Naive thymus-derived CD4-positive, alpha-beta T cell (primary cell): ENCODE measurements at regions of chr11 and their contacts with region 1.

Region 1: GRCh38 chr11:114159802-114160632 is 100.5 kb downstream of the ZBTB16 start:
- DNase-seq: peak; percentile 79 to 100 (median 99)
- ATAC-seq: peak; percentile 97
- H3K4me3 ChIP-seq: peak overlapping the region; percentile 21
- H3K4me3 Mint-ChIP-seq: peak overlapping the region; percentile 53 to 85 (median 78)
- H3K27ac ChIP-seq: peak overlapping the region; percentile 62
- H3K27ac Mint-ChIP-seq: peak overlapping the region; percentile 88 to 98 (median 93)
- H3K4me1 ChIP-seq: peaks cover 23 to 70% of the 10 kb centered on the region in 2 donors
- H3K4me1 Mint-ChIP-seq: peaks cover 58 to 98% (median 90%) of the 10 kb centered on the region in 7 donors
- H3K27me3 ChIP-seq: no peaks in the 10 kb centered on the region
- H3K27me3 Mint-ChIP-seq: no peaks in the 10 kb centered on the region

Region 2: DNA sequence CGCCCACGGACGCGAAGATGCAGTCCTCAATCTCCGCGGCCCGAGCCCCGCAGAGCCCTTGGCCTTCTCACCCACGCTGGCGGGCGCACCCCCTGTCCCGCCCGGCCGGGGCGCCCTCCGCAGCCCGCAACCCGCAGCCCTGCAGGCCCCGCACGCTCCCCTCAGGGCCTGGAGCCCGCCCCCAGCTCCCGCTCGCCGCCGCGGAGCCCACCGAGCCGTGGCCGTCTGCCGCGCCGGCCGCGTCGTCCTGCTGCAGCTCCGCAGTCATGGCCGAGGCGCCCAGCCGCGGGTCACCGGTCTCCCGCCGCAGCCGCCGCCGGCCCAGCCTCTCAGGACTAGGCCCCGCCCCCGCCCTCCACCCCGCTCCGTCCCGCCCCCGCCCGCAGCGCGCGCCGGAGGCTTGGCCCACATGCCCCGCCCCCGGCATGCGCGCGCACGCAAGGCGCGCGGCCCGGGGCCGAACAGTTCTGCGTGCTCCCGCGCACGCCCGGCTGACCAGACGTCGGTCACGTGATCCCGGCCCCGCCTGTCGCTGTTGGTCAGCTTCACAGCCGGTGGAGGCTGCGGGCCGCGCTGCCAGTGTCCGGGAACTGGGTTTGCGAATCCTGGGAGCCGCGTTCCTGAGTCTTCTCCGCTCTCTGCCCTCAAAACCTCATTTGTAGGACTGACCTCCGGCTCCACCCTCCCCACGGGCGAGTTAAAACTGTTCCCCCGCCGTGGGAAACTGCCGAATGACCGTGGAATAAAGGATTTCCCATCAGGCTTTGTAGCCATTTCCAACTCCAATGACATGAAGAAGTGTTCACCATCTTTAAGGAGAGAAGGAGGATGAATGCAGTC is 284.6 kb before region 1 on chr11 and contains the start of gene USP28:
- CTCF ChIA-PET with region 1: no interaction called
- POLR2A ChIA-PET with region 1: no interaction called
- intact Hi-C with region 1: loop called in 1 of 2 experiments (anchors 2 kb)
- DNase-seq: peak; percentile 49 to 92 (median 73)
- ATAC-seq: peak; percentile 97
- H3K4me3 ChIP-seq: peak within 1 kb of the TSS; percentile 79
- H3K4me3 Mint-ChIP-seq: peak within 1 kb of the TSS; percentile 88 to 100 (median 98)
- H3K27ac ChIP-seq: peak within 1 kb of the TSS; percentile 78
- H3K27ac Mint-ChIP-seq: peak within 1 kb of the TSS; percentile 91 to 99 (median 98)
- H3K4me1 ChIP-seq: no peaks in the 10 kb centered on the region
- H3K4me1 Mint-ChIP-seq: peaks cover 34 to 59% (median 54%) of the 10 kb centered on the region in 7 donors
- H3K27me3 ChIP-seq: no peaks in the 10 kb centered on the region
- H3K27me3 Mint-ChIP-seq: no peaks in the 10 kb centered on the region
- total RNA-seq, gene USP28: 12.0 to 50.3 (median 19.0) TPM

Region 3: GRCh38 chr11:113974741-113975470 is 185.1 kb before region 1 on chr11 and contains the start of gene HTR3A:
- CTCF ChIA-PET with region 1: no interaction called
- POLR2A ChIA-PET with region 1: no interaction called
- intact Hi-C with region 1: no loop called
- DNase-seq: no peak
- ATAC-seq: no peak
- H3K4me3 ChIP-seq: no peak within 1 kb of the TSS
- H3K4me3 Mint-ChIP-seq: no peak within 1 kb of the TSS
- H3K27ac ChIP-seq: no peak within 1 kb of the TSS
- H3K27ac Mint-ChIP-seq: peak within 1 kb of the TSS in 1 of 9 donors; percentile 32
- H3K4me1 ChIP-seq: no peaks in the 10 kb centered on the region
- H3K4me1 Mint-ChIP-seq: peaks cover 0 to 4% (median 0%) of the 10 kb centered on the region in 7 donors
- H3K27me3 ChIP-seq: no peaks in the 10 kb centered on the region
- H3K27me3 Mint-ChIP-seq: peaks cover 3 to 21% (median 6%) of the 10 kb centered on the region in 5 donors
- total RNA-seq, gene HTR3A: not detected

Region 4: GRCh38 chr11:114059278-114059983 is 100.6 kb before region 1 on chr11 and contains the start of gene ZBTB16:
- CTCF ChIA-PET with region 1: interaction called, 10 read pairs
- POLR2A ChIA-PET with region 1: interaction called, 3 read pairs
- intact Hi-C with region 1: loop called (anchors 1 to 2 kb)
- DNase-seq: peak; percentile 37 to 72 (median 58)
- ATAC-seq: peak; percentile 74
- H3K4me3 ChIP-seq: peak within 1 kb of the TSS; percentile 70
- H3K4me3 Mint-ChIP-seq: peak within 1 kb of the TSS; percentile 89 to 95 (median 92)
- H3K27ac ChIP-seq: peak within 1 kb of the TSS; percentile 14
- H3K27ac Mint-ChIP-seq: peak within 1 kb of the TSS in 8 of 9 donors; percentile 21 to 81 (median 55)
- H3K4me1 ChIP-seq: peaks cover 0 to 10% of the 10 kb centered on the region in 2 donors
- H3K4me1 Mint-ChIP-seq: peaks cover 0 to 10% (median 7%) of the 10 kb centered on the region in 7 donors
- H3K27me3 ChIP-seq: no peaks in the 10 kb centered on the region
- H3K27me3 Mint-ChIP-seq: peaks cover 16 to 76% (median 24%) of the 10 kb centered on the region in 5 donors
- total RNA-seq, gene ZBTB16: 3.0 to 22.1 (median 7.2) TPM

Region 5: DNA sequence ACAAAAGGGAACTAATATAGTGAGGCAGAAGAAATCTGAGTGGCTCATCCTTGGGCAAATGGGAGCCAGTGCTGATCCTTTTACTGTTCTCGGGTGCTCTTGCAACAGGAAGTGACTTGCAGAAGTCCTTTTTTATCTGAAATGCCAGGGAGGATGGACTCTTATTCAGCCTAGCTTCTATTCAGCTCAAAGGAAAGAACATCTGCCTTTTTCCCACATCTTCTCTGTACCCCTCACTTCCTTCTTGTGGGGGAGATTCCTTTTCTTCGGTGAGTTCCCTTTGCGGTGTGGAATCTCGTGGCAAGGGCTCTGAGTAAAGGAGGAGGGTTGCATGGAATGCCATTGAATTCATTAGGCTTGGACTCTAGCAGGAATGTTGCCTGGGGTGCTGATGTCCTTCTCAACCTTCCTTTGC is 24.3 kb before region 1 on chr11:
- CTCF ChIA-PET with region 1: no interaction called
- POLR2A ChIA-PET with region 1: interaction called, 3 read pairs
- intact Hi-C with region 1: loop called in 1 of 2 experiments (anchors 2 kb)
- DNase-seq: no peak
- ATAC-seq: peak; percentile 68
- H3K4me3 ChIP-seq: no peak overlapping the region
- H3K4me3 Mint-ChIP-seq: no peak overlapping the region
- H3K27ac ChIP-seq: no peak overlapping the region
- H3K27ac Mint-ChIP-seq: peak overlapping the region in 1 of 9 donors; percentile 60
- H3K4me1 ChIP-seq: peaks cover 14 to 20% of the 10 kb centered on the region in 2 donors
- H3K4me1 Mint-ChIP-seq: peaks cover 35 to 73% (median 57%) of the 10 kb centered on the region in 7 donors
- H3K27me3 ChIP-seq: no peaks in the 10 kb centered on the region
- H3K27me3 Mint-ChIP-seq: peaks cover 0 to 10% (median 0%) of the 10 kb centered on the region in 5 donors

Region 6: GRCh38 chr11:114180301-114181055 is 20.5 kb after region 1 on chr11:
- CTCF ChIA-PET with region 1: interaction called, 7 read pairs
- POLR2A ChIA-PET with region 1: interaction called, 363 read pairs
- intact Hi-C with region 1: loop called (anchors 1 kb)
- DNase-seq: peak in 1 of 9 donors; percentile 28
- ATAC-seq: peak; percentile 47
- H3K4me3 ChIP-seq: peak overlapping the region; percentile 12
- H3K4me3 Mint-ChIP-seq: peak overlapping the region in 7 of 10 donors; percentile 26 to 75 (median 63)
- H3K27ac ChIP-seq: no peak overlapping the region
- H3K27ac Mint-ChIP-seq: peak overlapping the region in 7 of 9 donors; percentile 46 to 96 (median 85)
- H3K4me1 ChIP-seq: peaks cover 48 to 74% of the 10 kb centered on the region in 2 donors
- H3K4me1 Mint-ChIP-seq: peaks cover 54 to 98% (median 83%) of the 10 kb centered on the region in 7 donors
- H3K27me3 ChIP-seq: no peaks in the 10 kb centered on the region
- H3K27me3 Mint-ChIP-seq: peaks cover 0 to under 1% (median 0%) of the 10 kb centered on the region in 5 donors

Region 7: GRCh38 chr11:114262681-114263512 is 102.9 kb after region 1 on chr11:
- CTCF ChIA-PET with region 1: interaction called, 9 read pairs
- POLR2A ChIA-PET with region 1: interaction called, 3 read pairs
- intact Hi-C with region 1: loop called (anchors 1 to 2 kb)
- DNase-seq: peak in 6 of 9 donors; percentile 10 to 41 (median 27)
- ATAC-seq: peak; percentile 56
- H3K4me3 ChIP-seq: no peak overlapping the region
- H3K4me3 Mint-ChIP-seq: no peak overlapping the region
- H3K27ac ChIP-seq: no peak overlapping the region
- H3K27ac Mint-ChIP-seq: no peak overlapping the region
- H3K4me1 ChIP-seq: no peaks in the 10 kb centered on the region
- H3K4me1 Mint-ChIP-seq: peaks cover 0 to 7% (median 4%) of the 10 kb centered on the region in 7 donors
- H3K27me3 ChIP-seq: no peaks in the 10 kb centered on the region
- H3K27me3 Mint-ChIP-seq: peaks cover 0 to 5% (median 3%) of the 10 kb centered on the region in 5 donors